Naive thymus-derived CD4-positive, alpha-beta T cell (primary cell): ENCODE measurements at regions of chr20 and their contacts with region 1.

Region 1: DNA sequence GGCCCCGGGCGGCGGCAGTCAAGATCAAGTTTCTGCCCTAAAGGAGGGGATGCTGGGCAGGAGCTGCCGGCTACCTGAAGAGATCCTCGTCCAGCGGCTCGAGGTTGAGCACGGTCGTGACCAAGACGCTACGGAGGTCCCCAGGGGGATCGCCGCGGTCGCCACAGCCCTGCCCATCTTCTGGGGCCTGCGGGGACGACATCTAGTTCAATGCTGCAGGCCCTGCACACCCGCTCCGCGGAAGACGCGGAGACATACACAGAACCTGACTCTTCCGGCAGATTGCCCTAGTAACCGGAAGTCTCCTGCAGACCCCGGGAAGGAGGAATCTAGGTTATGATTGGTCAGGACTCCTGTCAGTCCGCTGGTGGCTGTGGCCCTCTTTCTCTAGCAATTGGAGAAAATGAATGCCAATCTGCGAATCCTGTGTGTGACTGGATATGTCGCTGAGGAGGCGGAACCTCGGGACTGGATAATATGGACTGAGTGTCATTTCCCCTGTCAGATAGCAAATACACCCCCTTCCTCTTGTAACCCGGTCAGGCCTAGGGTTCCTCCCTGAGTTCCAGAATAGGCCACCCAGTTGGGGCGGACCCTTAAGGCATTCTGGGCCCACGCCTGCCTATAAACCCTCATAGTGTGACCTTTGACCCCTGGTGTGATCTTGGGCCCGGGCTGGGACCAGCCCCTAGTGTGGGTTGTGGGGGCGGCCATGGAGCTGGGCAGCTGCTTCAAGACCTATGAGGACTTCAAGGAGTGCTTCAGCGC is at the starts of genes ACOT8 and ZSWIM3:
- DNase-seq: peak; percentile 62 to 100 (median 97)
- ATAC-seq: peak; percentile 99
- H3K4me3 ChIP-seq: peak within 1 kb of the TSS; percentile 94
- H3K4me3 Mint-ChIP-seq: peak within 1 kb of the TSS; percentile 95 to 98 (median 96)
- H3K27ac ChIP-seq: peak within 1 kb of the TSS; percentile 95
- H3K27ac Mint-ChIP-seq: peak within 1 kb of the TSS; percentile 96 to 99 (median 98)
- H3K4me1 ChIP-seq: peaks cover 16 to 26% of the 10 kb centered on the region in 2 donors
- H3K4me1 Mint-ChIP-seq: peaks cover 23 to 76% (median 63%) of the 10 kb centered on the region in 7 donors
- H3K27me3 ChIP-seq: no peaks in the 10 kb centered on the region
- H3K27me3 Mint-ChIP-seq: no peaks in the 10 kb centered on the region
- total RNA-seq, gene ACOT8: 20.5 to 35.5 (median 29.2) TPM
- total RNA-seq, gene ZSWIM3: 1.3 to 6.8 (median 6.0) TPM

Region 2: DNA sequence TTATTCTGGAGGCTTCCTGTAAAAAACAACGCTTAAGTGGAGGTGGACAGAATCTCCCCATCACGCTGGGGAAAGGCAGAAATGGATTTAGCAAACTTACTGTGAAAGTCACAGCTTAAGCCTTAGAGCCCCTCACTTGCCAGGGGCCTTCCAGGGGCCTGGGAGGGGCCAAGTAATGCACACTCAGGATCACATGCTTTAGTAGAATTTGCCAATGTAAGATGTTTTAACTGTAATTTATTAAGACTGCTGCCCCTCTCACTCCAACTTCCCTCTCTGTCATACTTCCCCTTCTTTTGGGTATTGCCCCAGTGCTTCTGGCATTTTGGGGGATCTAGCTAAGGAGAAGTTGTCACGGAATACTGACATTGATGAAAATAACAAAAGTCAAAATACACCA is 1193.2 kb before region 1 on chr20:
- CTCF ChIA-PET with region 1: no interaction called
- POLR2A ChIA-PET with region 1: no interaction called
- intact Hi-C with region 1: no loop called
- DNase-seq: no peak
- ATAC-seq: peak; percentile 71
- H3K4me3 ChIP-seq: no peak overlapping the region
- H3K4me3 Mint-ChIP-seq: no peak overlapping the region
- H3K27ac ChIP-seq: no peak overlapping the region
- H3K27ac Mint-ChIP-seq: no peak overlapping the region
- H3K4me1 ChIP-seq: no peaks in the 10 kb centered on the region
- H3K4me1 Mint-ChIP-seq: peaks cover 4 to 24% (median 19%) of the 10 kb centered on the region in 7 donors
- H3K27me3 ChIP-seq: no peaks in the 10 kb centered on the region
- H3K27me3 Mint-ChIP-seq: no peaks in the 10 kb centered on the region

Region 3: DNA sequence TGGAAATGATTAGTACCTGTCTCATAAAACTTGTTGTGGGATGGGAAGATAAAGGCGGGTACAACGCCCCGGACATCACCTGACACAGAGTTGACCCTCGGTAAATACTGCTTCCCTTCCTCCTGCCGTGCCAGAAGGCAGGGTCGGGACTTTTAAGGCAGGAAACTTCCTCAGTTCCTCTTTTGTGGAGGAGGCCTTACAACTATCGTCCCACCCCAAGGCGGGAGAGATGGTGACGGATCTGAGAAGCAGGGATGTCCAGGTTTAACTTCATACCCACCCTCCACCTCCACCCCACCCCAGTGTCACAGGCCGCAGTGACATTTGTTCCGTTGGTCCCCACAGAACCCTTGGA is 65.0 kb before region 1 on chr20:
- CTCF ChIA-PET with region 1: no interaction called
- POLR2A ChIA-PET with region 1: interaction called, 3 read pairs
- intact Hi-C with region 1: loop called (anchors 1 to 2 kb)
- DNase-seq: peak in 1 of 9 donors; percentile 9
- ATAC-seq: peak; percentile 39
- H3K4me3 ChIP-seq: peak overlapping the region; percentile 70
- H3K4me3 Mint-ChIP-seq: peak overlapping the region; percentile 85 to 99 (median 92)
- H3K27ac ChIP-seq: peak overlapping the region; percentile 96
- H3K27ac Mint-ChIP-seq: peak overlapping the region; percentile 87 to 99 (median 93)
- H3K4me1 ChIP-seq: peaks cover 5 to 10% of the 10 kb centered on the region in 2 donors
- H3K4me1 Mint-ChIP-seq: peaks cover 13 to 28% (median 20%) of the 10 kb centered on the region in 7 donors
- H3K27me3 ChIP-seq: no peaks in the 10 kb centered on the region
- H3K27me3 Mint-ChIP-seq: peaks cover 0 to 5% (median 0%) of the 10 kb centered on the region in 5 donors

Region 4: DNA sequence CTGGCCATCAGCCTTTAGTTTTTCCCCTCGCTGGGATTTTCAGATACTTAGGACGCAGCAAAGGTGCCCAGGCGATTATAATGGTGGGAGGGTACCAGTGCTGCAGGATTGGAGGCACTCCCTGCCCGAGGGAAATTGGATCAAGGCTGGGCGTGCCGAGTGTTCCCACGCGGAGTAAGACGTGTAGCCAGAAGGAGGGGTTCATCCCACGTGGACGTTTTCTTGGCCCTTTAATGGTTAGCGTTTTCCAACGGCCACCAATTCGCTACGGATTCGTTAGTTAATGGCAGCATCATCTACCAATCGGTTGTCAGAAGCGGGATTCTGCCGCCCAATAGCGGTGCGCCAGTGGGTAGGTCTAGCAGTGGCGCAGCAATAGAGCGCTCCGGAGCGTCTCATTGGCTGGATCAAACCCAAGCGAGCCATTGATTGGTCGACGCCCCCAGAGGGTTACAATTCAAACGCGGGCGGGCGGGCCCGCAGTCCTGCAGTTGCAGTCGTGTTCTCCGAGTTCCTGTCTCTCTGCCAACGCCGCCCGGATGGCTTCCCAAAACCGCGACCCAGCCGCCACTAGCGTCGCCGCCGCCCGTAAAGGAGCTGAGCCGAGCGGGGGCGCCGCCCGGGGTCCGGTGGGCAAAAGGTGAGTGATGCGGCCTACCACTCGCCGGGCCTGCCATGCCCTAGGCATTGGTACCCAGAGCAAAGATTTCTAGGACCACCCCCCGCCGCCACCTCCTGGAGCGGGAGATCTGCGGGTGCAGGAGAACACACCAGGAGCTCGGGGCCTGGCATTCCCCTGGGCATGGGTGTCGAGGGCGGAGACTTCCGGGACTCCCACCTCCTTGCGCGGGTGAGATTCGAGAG is 44.9 kb before region 1 on chr20 and contains the start of gene UBE2C:
- CTCF ChIA-PET with region 1: interaction called, 3 read pairs
- POLR2A ChIA-PET with region 1: interaction called, 4 read pairs
- intact Hi-C with region 1: loop called (anchors 1 kb)
- DNase-seq: peak; percentile 73 to 95 (median 92)
- ATAC-seq: peak; percentile 100
- H3K4me3 ChIP-seq: peak within 1 kb of the TSS; percentile 52
- H3K4me3 Mint-ChIP-seq: peak within 1 kb of the TSS; percentile 79 to 96 (median 84)
- H3K27ac ChIP-seq: peak within 1 kb of the TSS; percentile 63
- H3K27ac Mint-ChIP-seq: peak within 1 kb of the TSS; percentile 36 to 87 (median 71)
- H3K4me1 ChIP-seq: peaks cover 0 to 12% of the 10 kb centered on the region in 2 donors
- H3K4me1 Mint-ChIP-seq: peaks cover 3 to 42% (median 16%) of the 10 kb centered on the region in 7 donors
- H3K27me3 ChIP-seq: no peaks in the 10 kb centered on the region
- H3K27me3 Mint-ChIP-seq: no peaks in the 10 kb centered on the region
- total RNA-seq, gene UBE2C: 0.50 to 129 (median 0.75) TPM in 4 of 5 experiments, not detected in the other

Region 5: DNA sequence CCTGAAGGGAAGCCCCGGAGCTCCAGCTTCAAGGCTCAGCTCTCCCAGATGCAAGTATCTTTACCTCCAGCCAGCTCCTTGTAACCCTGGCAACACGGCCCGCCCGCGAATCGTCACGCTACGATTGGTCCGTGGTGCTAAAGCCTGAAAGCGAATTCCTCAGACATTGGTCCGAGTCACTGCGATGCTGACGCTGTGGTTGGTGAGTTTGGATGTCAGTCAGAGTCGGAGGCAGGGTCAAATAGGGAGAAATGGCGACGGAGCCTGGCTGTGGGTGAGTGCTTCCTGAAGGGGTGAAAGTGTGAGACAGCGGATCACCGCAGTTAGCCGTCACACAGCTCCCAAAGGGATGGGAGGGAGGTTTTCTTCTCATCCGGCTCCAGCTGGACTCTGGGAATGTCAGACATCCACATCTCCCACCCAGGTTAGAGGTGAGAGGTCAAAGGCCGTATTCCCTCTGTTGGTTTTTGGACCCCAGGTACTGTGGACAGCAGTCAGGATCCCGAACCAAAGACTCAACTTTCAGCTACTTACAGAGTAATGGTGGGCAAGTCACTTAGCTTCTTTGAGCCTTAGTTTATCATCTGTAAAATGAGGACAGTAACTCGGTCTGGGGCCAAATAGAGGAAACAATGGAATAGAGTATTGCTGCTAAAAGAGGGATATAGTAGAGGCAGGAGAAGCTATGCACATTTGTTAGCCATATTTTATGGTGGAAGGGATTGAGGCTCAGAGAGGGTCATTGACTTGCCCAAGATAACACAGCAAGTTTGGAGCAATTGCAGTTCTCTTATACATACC is 23.9 kb after region 1 on chr20 and contains the start of gene ZSWIM1:
- CTCF ChIA-PET with region 1: no interaction called
- POLR2A ChIA-PET with region 1: interaction called, 64 read pairs
- intact Hi-C with region 1: loop called (anchors 1 kb)
- DNase-seq: peak; percentile 88 to 99 (median 98)
- ATAC-seq: peak; percentile 99
- H3K4me3 ChIP-seq: peak within 1 kb of the TSS; percentile 75
- H3K4me3 Mint-ChIP-seq: peak within 1 kb of the TSS; percentile 83 to 95 (median 92)
- H3K27ac ChIP-seq: peak within 1 kb of the TSS; percentile 95
- H3K27ac Mint-ChIP-seq: peak within 1 kb of the TSS; percentile 91 to 95 (median 93)
- H3K4me1 ChIP-seq: peaks cover 9 to 18% of the 10 kb centered on the region in 2 donors
- H3K4me1 Mint-ChIP-seq: peaks cover 26 to 43% (median 38%) of the 10 kb centered on the region in 7 donors
- H3K27me3 ChIP-seq: no peaks in the 10 kb centered on the region
- H3K27me3 Mint-ChIP-seq: no peaks in the 10 kb centered on the region
- total RNA-seq, gene ZSWIM1: 8.2 to 16.0 (median 9.8) TPM

Region 6: GRCh38 chr20:45910670-45911485 is 53.6 kb after region 1 on chr20:
- CTCF ChIA-PET with region 1: no interaction called
- POLR2A ChIA-PET with region 1: no interaction called
- intact Hi-C with region 1: loop called in 1 of 2 experiments (anchors 1 kb)
- DNase-seq: peak; percentile 54 to 93 (median 67)
- ATAC-seq: peak; percentile 93
- H3K4me3 ChIP-seq: peak overlapping the region; percentile 76
- H3K4me3 Mint-ChIP-seq: peak overlapping the region; percentile 59 to 84 (median 80)
- H3K27ac ChIP-seq: peak overlapping the region; percentile 2
- H3K27ac Mint-ChIP-seq: peak overlapping the region in 5 of 9 donors; percentile 25 to 67 (median 46)
- H3K4me1 ChIP-seq: peaks cover 13 to 17% of the 10 kb centered on the region in 2 donors
- H3K4me1 Mint-ChIP-seq: peaks cover 0 to 21% (median 16%) of the 10 kb centered on the region in 7 donors
- H3K27me3 ChIP-seq: no peaks in the 10 kb centered on the region
- H3K27me3 Mint-ChIP-seq: peaks cover 6 to 18% (median 10%) of the 10 kb centered on the region in 5 donors

Region 7: GRCh38 chr20:46774943-46775560 is 917.8 kb after region 1 on chr20:
- CTCF ChIA-PET with region 1: no interaction called
- POLR2A ChIA-PET with region 1: no interaction called
- intact Hi-C with region 1: no loop called
- DNase-seq: no peak
- ATAC-seq: no peak
- H3K4me3 ChIP-seq: no peak overlapping the region
- H3K4me3 Mint-ChIP-seq: no peak overlapping the region
- H3K27ac ChIP-seq: no peak overlapping the region
- H3K27ac Mint-ChIP-seq: no peak overlapping the region
- H3K4me1 ChIP-seq: no peaks in the 10 kb centered on the region
- H3K4me1 Mint-ChIP-seq: no peaks in the 10 kb centered on the region
- H3K27me3 ChIP-seq: peaks cover 0 to 3% of the 10 kb centered on the region in 2 donors
- H3K27me3 Mint-ChIP-seq: peaks cover 14 to 43% (median 35%) of the 10 kb centered on the region in 5 donors